Vagina (tissue), 2 donors: ENCODE measurements at regions of chr2 and their contacts with region 1.

Region 1: DNA sequence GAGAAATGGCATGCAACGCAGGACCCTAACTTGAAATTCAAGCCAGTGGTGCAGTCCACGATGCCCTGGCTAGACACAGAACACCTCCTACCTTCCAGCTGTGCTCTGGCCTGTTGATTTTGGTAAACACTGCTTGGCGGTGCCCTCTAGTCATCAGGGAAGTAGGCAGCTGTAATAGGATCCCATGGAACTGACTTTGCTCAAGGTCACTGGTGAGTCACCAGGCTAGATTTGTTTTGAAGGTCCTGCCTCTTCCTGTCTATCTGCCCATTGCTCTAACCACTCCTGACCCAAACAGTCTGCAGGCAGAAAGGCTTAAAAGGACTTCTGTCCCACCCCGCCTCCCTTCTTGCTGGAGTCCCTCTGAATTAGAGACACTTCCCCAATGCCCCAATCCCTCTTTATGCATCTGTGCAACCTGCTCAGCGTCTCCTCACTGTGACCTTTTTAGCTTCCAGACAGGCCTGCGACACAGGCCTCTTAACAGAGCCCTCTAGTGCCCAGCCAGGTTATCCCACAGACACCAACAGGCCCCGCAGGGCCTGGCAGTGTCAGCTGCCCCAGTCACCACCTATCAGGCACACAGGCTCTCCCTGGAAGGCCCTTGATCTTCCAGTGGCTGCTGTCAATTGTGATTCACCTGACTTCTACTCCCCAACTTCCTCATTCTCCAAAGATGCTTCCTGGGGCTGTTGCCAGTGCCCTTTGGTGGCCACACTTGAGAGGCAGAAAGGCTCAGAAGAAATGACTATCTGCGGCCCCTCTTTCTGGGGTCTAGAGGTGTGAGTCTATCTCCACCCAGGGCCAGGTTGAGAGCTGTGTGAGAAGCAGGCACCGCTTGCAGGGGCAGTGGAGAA is 5.2 kb downstream of the TMEM127 start:
- DNase-seq: no peak
- H3K4me3 ChIP-seq: no peak overlapping the region
- H3K27ac ChIP-seq: peak overlapping the region; percentile 83
- H3K4me1 ChIP-seq: peaks cover 76% of the 10 kb centered on the region
- H3K27me3 ChIP-seq: no peaks in the 10 kb centered on the region
- CTCF ChIP-seq: peak in 1 of 3 experiments; percentile 12
- POLR2A ChIP-seq: no peak

Region 2: DNA sequence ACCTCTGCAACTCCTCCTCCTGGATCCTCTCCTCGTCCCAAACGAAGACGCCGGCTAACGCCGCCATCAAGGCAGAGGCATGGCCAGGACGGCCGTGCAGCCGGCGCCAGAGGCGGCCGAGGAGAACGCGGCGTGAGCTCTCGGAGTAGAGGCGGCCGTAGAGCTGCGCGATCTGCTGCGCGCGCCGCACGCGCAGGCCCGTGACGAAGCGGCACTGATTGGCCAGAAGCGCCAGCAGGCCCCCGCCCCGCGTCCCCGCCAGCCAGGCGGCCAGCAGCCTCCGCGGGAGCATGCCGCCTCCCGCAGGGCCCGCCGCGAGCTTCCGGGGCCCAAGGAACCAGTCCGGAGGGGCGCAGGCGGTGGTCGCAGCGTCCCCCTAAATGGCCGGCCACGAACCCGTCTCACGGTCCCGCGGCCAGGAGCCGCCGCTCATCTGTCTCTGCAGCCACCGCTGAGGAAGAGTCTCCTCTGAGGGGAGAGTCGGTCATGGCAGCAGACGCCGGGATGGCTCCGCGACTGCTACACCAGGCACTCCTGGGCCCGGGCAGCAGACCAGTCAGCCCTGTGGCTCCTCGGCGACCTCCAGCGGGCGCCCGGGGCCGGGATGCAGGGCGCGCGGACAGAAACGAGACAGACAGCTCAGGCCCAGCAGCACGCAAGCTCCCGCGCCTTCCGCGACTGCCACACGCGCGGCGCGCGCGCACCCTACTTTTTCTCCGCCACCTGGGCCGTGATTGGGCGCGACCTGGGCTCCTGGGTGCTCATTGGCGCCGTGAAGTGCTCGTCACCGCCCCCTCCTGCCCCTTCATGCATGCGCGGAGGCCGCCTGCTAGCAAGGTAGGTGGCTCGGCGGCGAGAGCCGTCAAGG is 52.3 kb before region 1 on chr2 and contains the start of gene STARD7:
- intact Hi-C with region 1: loop called (anchors 5 kb)
- DNase-seq: peak in 1 of 2 donors; percentile 96
- H3K4me3 ChIP-seq: peak within 1 kb of the TSS; percentile 83 to 88
- H3K27ac ChIP-seq: peak within 1 kb of the TSS; percentile 93
- H3K4me1 ChIP-seq: peaks cover 55% of the 10 kb centered on the region
- H3K27me3 ChIP-seq: no peaks in the 10 kb centered on the region
- CTCF ChIP-seq: peak in 1 of 3 experiments; percentile 20
- POLR2A ChIP-seq: peak; percentile 35 to 90
- total RNA-seq, gene STARD7: 69.5 TPM